ENCODE measurements at regions of chr15 and their contacts with region 1.

Region 1: GRCh38 chr15:68820295-68821189 is at the start of gene ANP32A:
- DNase-seq: peak; percentile 98
- H3K4me3 ChIP-seq: peak within 1 kb of the TSS; percentile 77 to 98 (median 97)
- H3K27ac ChIP-seq: peak within 1 kb of the TSS; percentile 92 to 99 (median 98)
- H3K4me1 ChIP-seq: peaks cover 0 to 30% (median 25%) of the 10 kb centered on the region in 4 donors
- H3K27me3 ChIP-seq: no peaks in the 10 kb centered on the region
- CTCF ChIP-seq: no peak
- EP300 ChIP-seq: no peak
- POLR2A ChIP-seq: peak in 1 of 2 donors; percentile 87
- total RNA-seq, gene ANP32A: 37.6 to 71.2 (median 58.9) TPM

Region 2: GRCh38 chr15:68789534-68790241 is 30.9 kb before region 1 on chr15:
- intact Hi-C with region 1: loop called (anchors 5 kb)
- DNase-seq: no peak
- H3K4me3 ChIP-seq: no peak overlapping the region
- H3K27ac ChIP-seq: peak overlapping the region in 2 of 4 donors; percentile 16 to 38
- H3K4me1 ChIP-seq: peaks cover 0 to 59% (median 54%) of the 10 kb centered on the region in 4 donors
- H3K27me3 ChIP-seq: no peaks in the 10 kb centered on the region
- CTCF ChIP-seq: no peak
- EP300 ChIP-seq: no peak
- POLR2A ChIP-seq: no peak